ENCODE measurements at regions of chr13 and their contacts with region 1.

Region 1: GRCh38 chr13:26929971-26930730 is 169.6 kb upstream of the GPR12 start:
- DNase-seq: peak; percentile 74
- H3K4me3 Mint-ChIP-seq: no peak overlapping the region
- H3K27ac Mint-ChIP-seq: no peak overlapping the region
- H3K4me1 Mint-ChIP-seq: no peaks in the 10 kb centered on the region
- H3K27me3 Mint-ChIP-seq: peaks cover 30% of the 10 kb centered on the region
- CTCF ChIP-seq: peak; percentile 83

Region 2: DNA sequence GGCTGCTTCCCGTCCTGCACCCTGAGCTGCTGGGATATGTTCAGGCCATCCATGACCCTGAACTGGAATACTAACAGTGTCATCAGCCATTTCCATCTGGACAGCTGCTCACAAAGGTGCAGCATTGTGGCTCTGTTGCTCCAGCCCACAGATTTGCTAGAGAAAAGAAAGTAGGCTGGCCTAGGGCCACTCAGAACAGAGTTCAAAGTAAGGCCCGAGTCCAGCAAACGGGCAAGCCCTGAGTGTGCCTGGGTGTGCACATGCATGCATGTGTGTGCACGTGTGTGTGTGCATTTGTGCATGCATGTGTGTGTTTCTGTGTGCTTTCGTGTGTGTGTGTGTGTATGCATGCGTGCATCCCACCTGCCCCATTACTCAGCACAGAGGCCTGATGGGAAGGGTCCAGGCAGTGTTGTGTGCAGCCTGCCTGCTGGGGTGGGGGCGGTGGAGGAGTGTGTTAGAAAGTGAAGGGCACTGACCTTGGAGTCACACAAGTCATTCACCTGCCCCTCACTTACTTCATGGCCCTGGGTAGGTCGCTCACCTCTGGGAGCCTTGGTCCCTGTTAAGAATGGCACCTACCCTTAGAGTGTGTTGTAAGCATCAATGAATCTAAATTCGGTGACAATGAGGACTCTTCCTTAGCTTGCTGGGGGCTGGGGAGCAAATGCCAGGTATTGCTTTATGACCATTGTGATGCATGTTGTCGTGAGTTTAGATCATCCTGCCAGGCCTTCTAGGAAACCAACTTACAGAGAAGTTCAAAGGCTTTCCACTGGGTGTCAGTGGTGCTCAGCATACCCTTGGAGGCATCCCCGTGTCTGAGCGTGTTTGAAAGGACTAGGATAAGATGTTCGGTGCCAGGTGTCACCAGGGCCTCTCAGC is 222.8 kb before region 1 on chr13:
- CTCF ChIA-PET with region 1: interaction called, 3 read pairs
- intact Hi-C with region 1: loop called (anchors 1 kb)
- DNase-seq: peak; percentile 42
- H3K4me3 Mint-ChIP-seq: no peak overlapping the region
- H3K27ac Mint-ChIP-seq: no peak overlapping the region
- H3K4me1 Mint-ChIP-seq: no peaks in the 10 kb centered on the region
- H3K27me3 Mint-ChIP-seq: peaks cover 24% of the 10 kb centered on the region
- CTCF ChIP-seq: peak; percentile 28